Panc1 (cell line): ENCODE measurements at regions of chr4 and their contacts with region 1.

Region 1: DNA sequence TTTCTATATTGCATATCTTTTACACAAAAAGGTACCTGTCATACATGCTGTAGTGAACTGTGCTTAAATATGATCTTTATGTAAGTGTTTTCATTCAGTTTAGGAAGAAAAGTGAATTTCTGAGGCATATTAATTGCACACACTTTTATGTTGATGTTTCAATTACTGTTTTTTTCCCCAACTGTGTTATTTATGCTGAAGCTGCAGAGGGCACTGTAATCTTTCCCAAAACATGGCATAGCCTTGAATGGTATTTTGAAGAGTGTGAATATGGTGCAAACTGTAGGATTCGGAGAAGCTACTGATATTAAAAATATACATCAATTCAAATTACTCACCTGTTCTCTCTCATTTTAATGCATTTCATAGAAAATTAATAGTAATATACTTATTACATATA is 6.0 kb upstream of the CENPE start:
- DNase-seq: no peak
- ATAC-seq: 0 out of 2 replicates have a peak, but pooled peaks have one; percentile 38
- H3K4me3 ChIP-seq: no peak overlapping the region
- H3K27ac ChIP-seq: no peak overlapping the region
- H3K4me1 ChIP-seq: no peaks in the 10 kb centered on the region
- H3K27me3 ChIP-seq: no peaks in the 10 kb centered on the region
- CTCF ChIP-seq: peak; percentile 45; the same call in 1 of the 2 replicates

Region 2: DNA sequence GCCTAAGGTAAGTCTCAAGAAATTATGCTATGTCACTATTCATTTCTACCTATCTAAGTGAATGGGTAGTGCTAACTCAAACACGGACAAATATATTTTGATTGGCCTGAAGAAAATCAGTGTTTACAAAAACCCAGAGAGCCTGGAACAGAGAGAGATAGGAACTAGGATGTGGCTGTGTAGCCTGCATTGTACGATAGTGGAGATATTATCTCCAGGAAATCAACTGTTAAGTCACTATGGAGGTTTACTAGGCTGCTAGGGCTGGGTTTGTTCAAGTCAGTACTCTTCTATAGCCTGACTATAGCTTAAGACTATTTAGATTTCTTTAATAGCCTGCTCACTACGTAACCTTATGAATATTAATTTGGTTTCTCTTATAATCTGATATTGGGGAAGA is 387.7 kb after region 1 on chr4:
- CTCF ChIA-PET with region 1: no interaction called
- POLR2A ChIA-PET with region 1: no interaction called
- in situ Hi-C with region 1: no loop called
- intact Hi-C with region 1: no loop called
- DNase-seq: no peak
- ATAC-seq: no peak
- H3K4me3 ChIP-seq: no peak overlapping the region
- H3K27ac ChIP-seq: no peak overlapping the region
- H3K4me1 ChIP-seq: no peaks in the 10 kb centered on the region
- H3K27me3 ChIP-seq: no peaks in the 10 kb centered on the region
- CTCF ChIP-seq: no peak

Region 3: GRCh38 chr4:103786014-103786413 is 581.9 kb after region 1 on chr4:
- CTCF ChIA-PET with region 1: interaction called, 3 read pairs
- POLR2A ChIA-PET with region 1: no interaction called
- in situ Hi-C with region 1: no loop called
- intact Hi-C with region 1: loop called (anchors 5 kb)
- DNase-seq: peak; percentile 20
- ATAC-seq: 0 out of 2 replicates have a peak, but pooled peaks have one; percentile 48
- H3K4me3 ChIP-seq: no peak overlapping the region
- H3K27ac ChIP-seq: no peak overlapping the region
- H3K4me1 ChIP-seq: no peaks in the 10 kb centered on the region
- H3K27me3 ChIP-seq: no peaks in the 10 kb centered on the region
- CTCF ChIP-seq: peak; percentile 54

Region 4: DNA sequence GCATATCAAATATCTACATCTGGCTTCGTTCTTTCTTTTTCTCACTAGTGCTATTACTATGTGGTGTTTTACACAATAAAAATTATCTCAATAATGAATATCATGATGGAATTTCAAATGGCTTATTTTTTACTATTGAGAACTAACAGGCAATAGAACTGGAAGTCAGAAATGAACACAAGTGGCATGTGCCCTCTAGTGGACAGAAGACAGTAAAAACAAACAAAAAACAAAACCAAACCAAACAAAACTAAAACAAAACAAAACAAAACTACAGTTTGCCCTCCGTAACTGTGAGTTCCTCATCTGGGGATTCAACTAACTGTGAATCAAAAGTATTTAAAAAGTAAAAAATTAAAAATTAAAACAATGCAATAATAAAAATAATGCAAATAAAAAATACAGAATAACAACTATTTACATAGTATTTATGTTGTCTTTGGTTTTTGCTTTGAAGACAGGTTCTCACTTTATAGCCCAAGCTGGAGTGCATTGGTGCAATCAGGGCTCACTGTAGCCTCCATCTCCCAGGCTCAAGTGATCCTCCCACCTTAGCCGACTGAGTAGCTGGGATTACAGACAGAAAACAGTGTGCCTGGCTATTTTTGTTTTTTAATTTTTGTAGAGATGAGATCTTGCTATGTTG is 711.2 kb after region 1 on chr4:
- CTCF ChIA-PET with region 1: no interaction called
- POLR2A ChIA-PET with region 1: no interaction called
- in situ Hi-C with region 1: no loop called
- intact Hi-C with region 1: loop called (anchors 5 kb)
- DNase-seq: no peak
- ATAC-seq: no peak
- H3K4me3 ChIP-seq: no peak overlapping the region
- H3K27ac ChIP-seq: no peak overlapping the region
- H3K4me1 ChIP-seq: no peaks in the 10 kb centered on the region
- H3K27me3 ChIP-seq: no peaks in the 10 kb centered on the region
- CTCF ChIP-seq: peak; percentile 67